Caco-2 (cell line): ENCODE measurements at regions of chr16 and their contacts with region 1.

Region 1: DNA sequence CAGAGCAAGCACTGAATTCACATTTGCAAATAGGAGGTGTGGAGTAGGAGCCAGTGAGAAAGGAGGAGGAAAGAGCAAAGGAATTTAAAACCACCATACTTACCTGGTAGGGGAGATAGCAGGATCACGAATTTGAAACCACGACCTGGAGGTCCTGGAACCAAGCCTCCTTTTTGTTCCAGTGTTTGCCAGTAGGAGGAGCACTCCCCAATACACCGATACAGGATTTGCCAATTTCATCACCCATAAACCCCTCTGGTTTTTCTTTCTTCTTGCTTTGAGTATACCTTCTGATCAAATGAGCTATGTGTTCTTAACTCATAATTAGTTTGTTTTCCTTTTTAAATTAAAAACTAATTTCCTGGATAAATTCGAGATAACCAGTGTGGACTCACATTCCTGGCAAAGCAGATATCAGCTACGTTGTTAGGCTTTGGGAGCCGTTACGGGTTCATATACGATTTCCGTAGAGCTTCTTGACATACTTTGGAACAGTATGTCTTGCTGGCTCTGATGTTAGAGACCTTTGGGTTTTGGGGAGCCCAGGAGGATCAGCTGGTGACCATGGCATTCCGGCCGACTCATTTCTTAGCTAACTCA is 22.7 kb downstream of the BCO1 start:
- DNase-seq: peak in 1 of 2 experiments; percentile 35
- H3K4me3 ChIP-seq: no peak overlapping the region
- H3K4me3 Mint-ChIP-seq: no peak overlapping the region
- H3K27ac Mint-ChIP-seq: no peak overlapping the region
- H3K4me1 ChIP-seq: no peaks in the 10 kb centered on the region
- H3K4me1 Mint-ChIP-seq: no peaks in the 10 kb centered on the region
- H3K27me3 ChIP-seq: no peaks in the 10 kb centered on the region
- H3K27me3 Mint-ChIP-seq: no peaks in the 10 kb centered on the region
- CTCF ChIP-seq: peak; percentile 52 to 76

Region 2: GRCh38 chr16:81366316-81366932 is 105.3 kb after region 1 on chr16:
- CTCF ChIA-PET with region 1: no interaction called
- POLR2A ChIA-PET with region 1: no interaction called
- intact Hi-C with region 1: loop called (anchors 1 kb)
- DNase-seq: peak in 1 of 2 experiments; percentile 56
- H3K4me3 ChIP-seq: no peak overlapping the region
- H3K4me3 Mint-ChIP-seq: no peak overlapping the region
- H3K27ac Mint-ChIP-seq: no peak overlapping the region
- H3K4me1 ChIP-seq: no peaks in the 10 kb centered on the region
- H3K4me1 Mint-ChIP-seq: no peaks in the 10 kb centered on the region
- H3K27me3 ChIP-seq: no peaks in the 10 kb centered on the region
- H3K27me3 Mint-ChIP-seq: no peaks in the 10 kb centered on the region
- CTCF ChIP-seq: peak; percentile 64 to 83